Activated CD4-positive, alpha-beta memory T cell treated with anti-CD3 and anti-CD28 coated beads, Interleukin-2, amount 10 ng/mL, durations not matched to agents 7 days and 5 days (primary cell): ENCODE measurements at regions of chr17 and their contacts with region 1.

Region 1: GRCh38 chr17:39199820-39200069 is 338 bp upstream of the RPL19 start:
- DNase-seq: peak; percentile 89
- H3K4me3 Mint-ChIP-seq: peak overlapping the region; percentile 93
- H3K27ac Mint-ChIP-seq: peak overlapping the region; percentile 96
- H3K4me1 Mint-ChIP-seq: peaks cover 66% of the 10 kb centered on the region
- H3K27me3 Mint-ChIP-seq: no peaks in the 10 kb centered on the region

Region 2: DNA sequence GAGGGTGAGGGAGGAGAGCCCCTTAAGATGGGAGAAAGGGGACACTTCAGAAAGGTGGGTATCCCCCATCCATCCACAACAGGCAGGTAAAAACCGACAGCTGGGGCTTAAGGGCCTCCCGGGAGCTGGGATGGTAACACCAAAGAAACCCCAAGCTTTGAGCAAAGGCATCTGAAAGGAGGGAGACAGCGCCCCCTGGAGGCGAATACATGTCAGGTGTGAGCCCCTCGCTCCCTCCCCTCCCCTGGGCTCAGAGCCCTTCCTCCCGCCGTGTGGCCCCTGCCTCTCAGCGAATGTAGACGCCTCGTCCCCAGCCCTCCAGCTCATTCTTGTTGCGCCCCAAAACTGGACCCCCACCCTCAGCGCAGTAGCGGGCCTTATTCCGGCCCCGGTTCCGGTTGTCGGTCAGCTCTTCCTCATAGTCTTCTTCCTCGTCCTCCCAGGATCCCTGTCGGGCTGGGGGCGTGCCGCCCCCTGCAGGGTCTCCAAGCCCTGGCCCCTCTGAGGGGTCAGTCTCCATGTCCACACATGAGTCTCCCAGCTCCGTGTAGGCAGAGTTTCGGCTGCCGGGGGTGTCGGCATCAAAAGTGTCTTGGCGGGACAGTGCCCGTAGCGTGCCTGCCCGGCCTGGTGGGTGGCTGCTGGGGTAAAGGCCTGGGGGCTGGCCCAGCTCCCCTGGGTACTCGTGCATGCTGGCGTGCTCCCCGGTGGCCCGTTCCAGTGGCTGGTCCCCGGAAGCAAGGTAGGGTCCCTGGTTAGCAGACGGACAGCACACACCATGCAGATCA is 24.6 kb before region 1 on chr17:
- CTCF ChIA-PET with region 1: interaction called, 7 read pairs
- POLR2A ChIA-PET with region 1: interaction called, 13 read pairs
- DNase-seq: peak; percentile 75
- H3K4me3 Mint-ChIP-seq: no peak overlapping the region
- H3K27ac Mint-ChIP-seq: no peak overlapping the region
- H3K4me1 Mint-ChIP-seq: peaks cover 8% of the 10 kb centered on the region
- H3K27me3 Mint-ChIP-seq: no peaks in the 10 kb centered on the region

Region 3: GRCh38 chr17:39261286-39261685 is 61.5 kb after region 1 on chr17:
- CTCF ChIA-PET with region 1: no interaction called
- POLR2A ChIA-PET with region 1: no interaction called
- DNase-seq: peak; percentile 24
- H3K4me3 Mint-ChIP-seq: no peak overlapping the region
- H3K27ac Mint-ChIP-seq: no peak overlapping the region
- H3K4me1 Mint-ChIP-seq: peaks cover 3% of the 10 kb centered on the region
- H3K27me3 Mint-ChIP-seq: no peaks in the 10 kb centered on the region

Region 4: DNA sequence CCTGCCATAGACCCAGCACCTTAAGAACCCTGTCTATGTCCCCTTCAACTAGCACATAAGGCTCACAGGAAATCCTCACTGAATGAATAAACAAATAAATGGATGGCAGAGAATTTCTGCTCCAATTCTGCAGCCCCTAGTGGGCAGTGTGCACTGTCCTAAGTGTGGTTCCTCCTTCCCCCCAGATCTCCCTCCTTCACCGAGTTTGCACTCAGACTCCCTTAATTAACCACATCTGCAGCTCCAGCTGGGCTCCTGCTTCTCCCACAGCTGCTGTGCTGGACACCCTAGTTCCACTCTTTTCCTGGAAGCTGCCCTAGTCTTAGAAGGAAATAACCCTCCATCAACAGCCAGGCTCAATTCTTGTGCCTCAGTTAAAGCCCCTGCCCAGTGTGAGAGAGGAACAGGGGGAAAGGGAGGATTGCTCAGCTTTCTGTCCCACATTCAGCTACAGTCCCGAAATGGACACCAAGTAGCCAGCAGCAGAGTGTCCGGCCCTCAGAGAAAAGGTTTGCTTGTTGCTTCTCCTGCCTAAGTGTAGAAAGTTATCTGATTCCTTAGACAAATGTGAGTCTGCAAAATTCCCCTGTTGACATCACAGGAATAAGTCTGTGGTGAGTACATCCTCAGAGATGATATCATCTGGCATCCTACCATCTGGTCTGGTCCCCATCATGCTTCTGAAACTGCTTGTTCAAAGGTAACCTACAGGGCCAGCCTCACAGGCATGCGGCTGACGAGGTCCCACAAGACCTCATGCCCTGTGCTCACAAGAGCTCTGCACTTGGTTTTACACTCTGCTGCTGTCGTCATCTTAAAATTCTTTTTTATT is 740.1 kb after region 1 on chr17:
- CTCF ChIA-PET with region 1: no interaction called
- POLR2A ChIA-PET with region 1: no interaction called
- DNase-seq: peak; percentile 55
- H3K4me3 Mint-ChIP-seq: no peak overlapping the region
- H3K27ac Mint-ChIP-seq: peak overlapping the region; percentile 66
- H3K4me1 Mint-ChIP-seq: peaks cover 18% of the 10 kb centered on the region
- H3K27me3 Mint-ChIP-seq: no peaks in the 10 kb centered on the region